Head of caudate nucleus (tissue), 42 donors: ENCODE measurements at regions of chr11 and their contacts with region 1.

Region 1: GRCh38 chr11:61803889-61804647 is 11.4 kb downstream of the FEN1 start:
- DNase-seq: no peak

Region 2: GRCh38 chr11:61645179-61645868 is 158.7 kb before region 1 on chr11:
- intact Hi-C with region 1: no loop called
- DNase-seq: no peak

Region 3: GRCh38 chr11:61891331-61892084 is 87.4 kb after region 1 on chr11 and contains the start of gene FADS3:
- intact Hi-C with region 1: loop called (anchors 5 kb)
- DNase-seq: peak; percentile 67 to 94 (median 87)